Activated CD4-positive, alpha-beta memory T cell treated with anti-CD3 and anti-CD28 coated beads, Interleukin-2, amount 10 ng/mL, durations not matched to agents 7 days and 5 days (primary cell): ENCODE measurements at regions of chr14 and their contacts with region 1.

Region 1: DNA sequence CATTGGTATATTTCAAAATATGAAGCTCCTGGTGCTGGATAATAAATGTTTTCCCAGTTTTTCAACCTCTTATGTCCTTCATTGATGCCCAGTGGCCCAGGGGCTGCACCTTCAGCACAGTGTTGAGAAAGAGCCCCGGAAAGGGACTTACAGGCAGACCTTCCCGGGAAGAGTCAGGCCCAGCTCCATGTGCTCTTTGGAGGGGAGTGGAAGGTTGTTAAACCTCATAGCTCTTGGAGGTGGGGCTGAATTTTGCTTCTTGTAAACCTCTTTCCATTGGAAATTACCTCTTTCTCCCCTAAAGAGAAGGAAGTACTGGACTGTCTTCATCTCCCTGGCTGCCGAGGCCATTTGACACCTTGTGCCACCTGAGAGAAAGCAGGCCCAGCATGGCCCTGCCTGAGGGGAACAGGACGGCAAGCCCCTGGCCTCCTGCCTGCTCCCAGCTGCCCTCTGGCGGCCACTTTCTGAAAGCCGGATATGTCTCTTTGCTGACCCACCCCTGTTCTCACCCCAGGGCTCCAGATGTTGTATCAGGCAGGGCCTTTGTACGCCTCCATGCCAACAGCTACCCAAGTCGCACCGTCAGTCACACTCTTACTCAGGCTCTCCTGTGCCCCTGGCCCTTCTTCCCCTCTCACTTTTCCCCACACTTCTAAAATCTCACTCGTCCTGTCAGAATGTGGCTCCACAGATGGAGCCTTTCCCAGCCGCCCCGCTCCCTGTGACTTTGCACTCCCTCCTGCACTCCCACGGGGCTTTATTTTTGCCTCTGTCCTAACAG is 43.0 kb downstream of the EVL start:
- DNase-seq: peak; percentile 86
- H3K4me3 Mint-ChIP-seq: no peak overlapping the region
- H3K27ac Mint-ChIP-seq: peak overlapping the region; percentile 76
- H3K4me1 Mint-ChIP-seq: peaks cover 70% of the 10 kb centered on the region
- H3K27me3 Mint-ChIP-seq: no peaks in the 10 kb centered on the region

Region 2: DNA sequence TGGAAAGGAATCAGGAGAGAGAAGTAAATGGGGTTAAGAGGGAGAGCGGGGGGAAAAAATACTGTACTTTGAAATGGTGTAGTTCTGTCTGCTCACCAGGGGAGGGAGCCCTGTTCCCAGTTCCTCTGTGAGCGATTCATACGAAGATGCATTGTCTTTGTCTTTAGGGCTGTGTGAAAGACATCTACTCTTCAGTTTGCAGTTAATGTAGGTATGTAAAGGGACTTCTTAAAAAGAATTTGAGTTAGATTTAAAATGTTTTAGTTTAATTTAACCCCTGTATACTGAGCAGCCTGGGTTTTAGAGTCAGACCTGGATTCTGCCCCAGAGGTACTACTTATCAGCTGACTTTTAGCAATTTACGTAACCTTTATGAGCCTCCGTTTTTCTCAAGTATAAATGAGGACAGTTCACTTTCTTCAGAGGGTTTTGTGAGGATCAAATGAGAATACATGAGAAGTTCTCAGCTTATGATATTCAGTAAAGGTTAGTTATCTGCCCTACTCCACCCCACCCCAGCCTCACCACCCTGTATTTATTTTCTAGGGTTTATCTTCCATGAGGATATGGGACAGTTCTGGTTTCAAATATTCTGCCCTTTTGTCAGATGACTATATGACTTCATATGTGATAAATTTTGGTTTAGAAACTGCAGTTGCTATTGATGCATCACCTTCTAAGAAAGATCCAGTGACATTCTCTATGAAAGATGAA is 125.5 kb before region 1 on chr14:
- CTCF ChIA-PET with region 1: interaction called, 27 read pairs
- POLR2A ChIA-PET with region 1: no interaction called
- DNase-seq: peak; percentile 67
- H3K4me3 Mint-ChIP-seq: no peak overlapping the region
- H3K27ac Mint-ChIP-seq: no peak overlapping the region
- H3K4me1 Mint-ChIP-seq: peaks cover 14% of the 10 kb centered on the region
- H3K27me3 Mint-ChIP-seq: no peaks in the 10 kb centered on the region

Region 3: GRCh38 chr14:100056964-100057795 is 51.1 kb before region 1 on chr14:
- CTCF ChIA-PET with region 1: interaction called, 21 read pairs
- POLR2A ChIA-PET with region 1: interaction called, 1,586 read pairs
- DNase-seq: no peak
- H3K4me3 Mint-ChIP-seq: no peak overlapping the region
- H3K27ac Mint-ChIP-seq: no peak overlapping the region
- H3K4me1 Mint-ChIP-seq: peaks cover 51% of the 10 kb centered on the region
- H3K27me3 Mint-ChIP-seq: no peaks in the 10 kb centered on the region

Region 4: GRCh38 chr14:100078991-100079725 is 29.1 kb before region 1 on chr14:
- CTCF ChIA-PET with region 1: interaction called, 563 read pairs
- POLR2A ChIA-PET with region 1: interaction called, 1,586 read pairs
- DNase-seq: peak; percentile 91
- H3K4me3 Mint-ChIP-seq: peak overlapping the region; percentile 76
- H3K27ac Mint-ChIP-seq: peak overlapping the region; percentile 90
- H3K4me1 Mint-ChIP-seq: peaks cover 98% of the 10 kb centered on the region
- H3K27me3 Mint-ChIP-seq: no peaks in the 10 kb centered on the region